CD14-positive monocyte (primary cell): ENCODE measurements at regions of chr15 and their contacts with region 1.

Region 1: GRCh38 chr15:23760024-23760423 is 72.9 kb upstream of the NDN start:
- DNase-seq: no peak
- H3K4me3 ChIP-seq: no peak overlapping the region
- H3K4me3 Mint-ChIP-seq: no peak overlapping the region
- H3K27ac ChIP-seq: no peak overlapping the region
- H3K27ac Mint-ChIP-seq: no peak overlapping the region
- H3K4me1 ChIP-seq: no peaks in the 10 kb centered on the region
- H3K4me1 Mint-ChIP-seq: no peaks in the 10 kb centered on the region
- H3K27me3 ChIP-seq: no peaks in the 10 kb centered on the region
- H3K27me3 Mint-ChIP-seq: no peaks in the 10 kb centered on the region
- CTCF ChIP-seq: no peak

Region 2: DNA sequence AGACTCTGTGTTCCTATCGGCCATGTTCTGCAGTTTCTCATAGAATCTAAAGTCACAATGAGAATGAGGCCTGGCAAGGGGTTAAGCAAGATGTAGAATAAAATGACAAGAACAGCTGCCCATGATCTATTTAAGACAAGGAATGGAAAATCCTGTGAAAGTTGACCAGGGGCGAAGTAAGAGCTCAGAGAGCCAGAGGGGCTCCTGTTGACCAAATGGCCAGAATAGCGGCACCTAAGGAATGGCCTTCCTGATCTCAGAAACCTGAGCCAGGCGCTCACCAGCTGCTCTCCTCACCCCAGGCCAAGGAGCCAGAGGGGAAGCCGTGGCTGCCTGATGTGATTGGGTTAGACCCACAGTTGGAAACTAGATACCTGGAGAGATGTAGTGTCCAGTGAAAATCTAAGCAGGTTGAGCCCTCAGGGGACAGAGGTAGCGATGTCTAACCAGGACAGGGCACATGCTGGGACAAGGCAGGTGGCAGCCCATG is 33.2 kb after region 1 on chr15:
- intact Hi-C with region 1: no loop called
- DNase-seq: no peak
- H3K4me3 ChIP-seq: no peak overlapping the region
- H3K4me3 Mint-ChIP-seq: no peak overlapping the region
- H3K27ac ChIP-seq: no peak overlapping the region
- H3K27ac Mint-ChIP-seq: peak overlapping the region in 2 of 7 donors; percentile 24 to 29
- H3K4me1 ChIP-seq: no peaks in the 10 kb centered on the region
- H3K4me1 Mint-ChIP-seq: no peaks in the 10 kb centered on the region
- H3K27me3 ChIP-seq: no peaks in the 10 kb centered on the region
- H3K27me3 Mint-ChIP-seq: no peaks in the 10 kb centered on the region
- CTCF ChIP-seq: no peak

Region 3: GRCh38 chr15:23806980-23807379 is 47.0 kb after region 1 on chr15:
- intact Hi-C with region 1: loop called in 1 of 2 experiments (anchors 5 kb)
- DNase-seq: no peak
- H3K4me3 ChIP-seq: no peak overlapping the region
- H3K4me3 Mint-ChIP-seq: no peak overlapping the region
- H3K27ac ChIP-seq: no peak overlapping the region
- H3K27ac Mint-ChIP-seq: no peak overlapping the region
- H3K4me1 ChIP-seq: no peaks in the 10 kb centered on the region
- H3K4me1 Mint-ChIP-seq: no peaks in the 10 kb centered on the region
- H3K27me3 ChIP-seq: no peaks in the 10 kb centered on the region
- H3K27me3 Mint-ChIP-seq: peaks cover 0 to 2% (median 1%) of the 10 kb centered on the region in 3 donors
- CTCF ChIP-seq: no peak